Mammary epithelial cell (primary cell): ENCODE measurements at regions of chr15 and their contacts with region 1.

Region 1: GRCh38 chr15:80455668-80456442 is 51.7 kb downstream of the ARNT2 start:
- DNase-seq: peak; percentile 72
- H3K4me3 ChIP-seq: no peak overlapping the region
- H3K27ac ChIP-seq: no peak overlapping the region
- H3K4me1 ChIP-seq: peaks cover 5% of the 10 kb centered on the region
- H3K27me3 ChIP-seq: no peaks in the 10 kb centered on the region
- CTCF ChIP-seq: peak; percentile 95 to 97

Region 2: DNA sequence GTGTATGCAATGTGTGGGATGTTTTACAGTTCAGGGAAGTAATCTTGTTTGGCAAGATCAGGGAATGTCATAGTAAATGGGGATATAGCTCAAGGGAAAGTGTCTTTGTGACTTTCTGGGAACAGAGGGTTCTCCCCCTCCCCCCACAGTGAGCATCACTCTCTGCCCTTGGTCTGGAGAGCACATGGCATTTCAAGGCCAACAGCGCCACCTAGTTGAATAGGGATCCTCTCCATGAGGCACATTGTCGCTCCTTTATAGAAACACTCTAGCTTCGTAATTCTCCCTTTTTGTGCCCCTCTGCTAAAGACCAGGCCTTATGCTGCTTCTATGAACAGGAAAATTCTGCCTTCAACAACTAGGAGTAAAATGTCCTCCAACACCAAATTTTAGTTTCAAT is 88.8 kb before region 1 on chr15:
- CTCF ChIA-PET with region 1: no interaction called
- dilution Hi-C with region 1: no loop called
- in situ Hi-C with region 1: no loop called
- intact Hi-C with region 1: no loop called
- DNase-seq: no peak
- H3K4me3 ChIP-seq: no peak overlapping the region
- H3K27ac ChIP-seq: no peak overlapping the region
- H3K4me1 ChIP-seq: no peaks in the 10 kb centered on the region
- H3K27me3 ChIP-seq: no peaks in the 10 kb centered on the region
- CTCF ChIP-seq: peak in 1 of 2 donors; percentile 10

Region 3: DNA sequence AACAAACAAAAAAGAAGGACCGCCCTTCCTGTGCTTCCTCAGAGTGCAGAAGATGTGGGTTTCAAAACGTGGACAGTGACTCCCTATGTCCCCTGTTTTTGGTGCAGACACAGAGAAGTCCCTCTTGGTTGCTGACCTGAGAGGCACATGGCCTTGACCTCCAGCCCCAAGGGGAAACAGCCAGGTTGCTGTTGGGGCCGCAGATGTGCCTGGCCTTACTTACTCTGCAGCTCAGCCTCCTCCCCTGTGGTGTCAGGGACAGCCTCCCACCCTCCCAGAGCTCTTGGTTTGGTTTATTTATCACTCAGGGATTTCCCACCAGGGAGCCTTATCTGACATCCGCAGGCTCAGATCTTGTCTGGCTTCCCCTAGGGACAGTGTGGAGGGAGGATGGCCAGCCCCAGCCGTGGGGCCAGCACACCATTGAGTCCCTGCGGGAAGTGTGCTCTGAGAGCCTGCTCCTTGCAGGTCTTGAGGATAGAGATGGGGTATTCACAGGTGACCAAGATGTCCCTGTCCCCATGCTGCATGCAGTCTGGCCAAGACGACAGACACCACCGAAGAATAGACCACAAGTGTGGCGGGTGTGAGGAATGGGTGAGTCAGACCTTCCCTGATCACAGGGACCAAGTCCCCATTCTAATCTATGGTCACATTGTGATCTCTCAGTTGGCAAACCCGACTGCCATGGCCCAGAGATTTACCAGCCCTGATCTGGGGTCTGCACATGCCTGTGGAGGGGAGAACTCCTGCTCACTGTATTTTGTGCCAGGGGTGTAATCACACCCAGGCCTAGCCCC is 104.9 kb after region 1 on chr15:
- CTCF ChIA-PET with region 1: no interaction called
- dilution Hi-C with region 1: no loop called
- in situ Hi-C with region 1: loop called (anchors 5 to 10 kb)
- intact Hi-C with region 1: no loop called
- DNase-seq: no peak
- H3K4me3 ChIP-seq: no peak overlapping the region
- H3K27ac ChIP-seq: no peak overlapping the region
- H3K4me1 ChIP-seq: no peaks in the 10 kb centered on the region
- H3K27me3 ChIP-seq: no peaks in the 10 kb centered on the region
- CTCF ChIP-seq: no peak

Region 4: GRCh38 chr15:80695104-80695910 is 239.5 kb after region 1 on chr15 and contains the start of gene ABHD17C:
- CTCF ChIA-PET with region 1: no interaction called
- dilution Hi-C with region 1: no loop called
- in situ Hi-C with region 1: no loop called
- intact Hi-C with region 1: loop called (anchors 5 kb)
- DNase-seq: peak; percentile 70
- H3K4me3 ChIP-seq: peak within 1 kb of the TSS; percentile 89 to 95 (median 95)
- H3K27ac ChIP-seq: peak within 1 kb of the TSS; percentile 79
- H3K4me1 ChIP-seq: peaks cover 19% of the 10 kb centered on the region
- H3K27me3 ChIP-seq: no peaks in the 10 kb centered on the region
- CTCF ChIP-seq: no peak
- total RNA-seq, gene ABHD17C: 5.2 to 23.2 TPM

Region 5: DNA sequence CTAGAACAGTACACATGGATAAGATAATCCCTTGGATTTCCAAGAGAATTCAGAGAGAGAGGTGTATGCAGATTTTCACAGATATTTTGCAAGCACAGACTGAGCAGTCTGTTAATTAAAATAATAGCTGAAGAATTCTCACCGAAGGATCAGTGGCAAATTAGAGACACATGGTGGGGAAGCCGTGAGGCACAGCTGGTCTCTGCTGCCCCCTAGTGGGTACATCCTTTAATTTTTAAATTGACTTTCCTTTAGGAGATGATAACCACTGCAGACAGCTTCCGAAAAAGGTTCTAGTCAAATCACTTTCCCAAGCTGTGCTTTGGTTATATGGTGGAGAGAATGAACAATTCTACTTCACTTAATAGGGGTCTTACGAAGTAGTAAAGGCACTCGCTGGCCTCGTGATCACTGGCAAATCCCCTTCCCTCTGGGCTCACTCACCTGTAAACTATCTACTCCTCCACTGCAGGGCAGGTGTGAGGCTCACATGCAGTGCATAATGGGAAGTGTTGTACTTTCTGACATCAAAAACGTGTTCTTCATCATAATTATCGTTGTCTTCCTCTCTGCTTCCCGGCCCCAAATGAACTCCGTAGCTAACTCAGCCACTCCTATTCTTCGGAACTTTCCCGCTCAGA is 514.3 kb after region 1 on chr15:
- CTCF ChIA-PET with region 1: no interaction called
- dilution Hi-C with region 1: no loop called
- in situ Hi-C with region 1: loop called (anchors 10 to 25 kb)
- intact Hi-C with region 1: loop called (anchors 1 kb)
- DNase-seq: peak; percentile 37
- H3K4me3 ChIP-seq: no peak overlapping the region
- H3K27ac ChIP-seq: no peak overlapping the region
- H3K4me1 ChIP-seq: no peaks in the 10 kb centered on the region
- H3K27me3 ChIP-seq: no peaks in the 10 kb centered on the region
- CTCF ChIP-seq: peak; percentile 57 to 79

Region 6: DNA sequence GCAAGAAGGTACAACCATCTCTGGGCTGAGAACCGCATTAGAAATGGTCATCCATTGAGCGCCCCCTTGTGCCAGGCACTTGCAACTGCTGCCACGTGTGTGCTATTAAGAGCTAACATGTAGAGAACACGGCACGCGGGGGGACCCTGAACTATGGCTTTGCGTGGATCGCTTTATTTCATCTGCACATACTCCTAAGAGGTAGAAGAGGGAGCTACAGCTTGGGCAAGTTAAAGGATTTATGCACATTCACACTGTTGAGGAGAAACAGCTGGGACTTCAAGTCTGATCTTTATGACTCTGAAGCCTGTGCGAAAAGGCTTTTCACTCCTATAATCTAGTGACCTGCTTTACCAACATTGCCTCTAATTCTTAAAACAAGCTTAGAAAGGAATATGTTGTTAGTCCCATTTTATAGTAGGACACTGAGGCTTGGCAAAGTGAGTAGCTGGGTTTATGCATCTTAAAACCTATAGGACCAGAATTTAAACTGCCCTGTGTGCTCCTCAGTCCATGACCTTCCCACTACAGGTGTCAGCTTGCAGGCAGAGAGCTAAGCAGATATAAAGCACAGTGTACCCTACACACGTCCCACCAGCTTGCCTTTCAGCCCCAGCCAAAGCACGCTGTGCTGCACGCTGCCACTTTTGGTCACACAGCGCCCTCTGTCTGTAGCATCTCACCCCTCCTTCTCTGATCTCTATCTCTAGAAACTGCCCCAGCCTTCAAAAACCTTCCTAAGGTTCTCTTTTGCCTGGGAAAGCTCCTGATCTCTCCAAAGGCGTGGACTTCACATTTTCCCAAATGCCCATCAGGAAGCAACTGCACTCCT is 810.3 kb after region 1 on chr15:
- CTCF ChIA-PET with region 1: no interaction called
- dilution Hi-C with region 1: no loop called
- in situ Hi-C with region 1: no loop called
- intact Hi-C with region 1: loop called (anchors 1 kb)
- DNase-seq: peak; percentile 59
- H3K4me3 ChIP-seq: peak overlapping the region in 1 of 3 experiments; percentile 1
- H3K27ac ChIP-seq: no peak overlapping the region
- H3K4me1 ChIP-seq: peaks cover 5% of the 10 kb centered on the region
- H3K27me3 ChIP-seq: no peaks in the 10 kb centered on the region
- CTCF ChIP-seq: peak; percentile 95 to 96